Prostate gland (tissue), 2 donors: ENCODE measurements at regions of chr20 and their contacts with region 1.

Region 1: DNA sequence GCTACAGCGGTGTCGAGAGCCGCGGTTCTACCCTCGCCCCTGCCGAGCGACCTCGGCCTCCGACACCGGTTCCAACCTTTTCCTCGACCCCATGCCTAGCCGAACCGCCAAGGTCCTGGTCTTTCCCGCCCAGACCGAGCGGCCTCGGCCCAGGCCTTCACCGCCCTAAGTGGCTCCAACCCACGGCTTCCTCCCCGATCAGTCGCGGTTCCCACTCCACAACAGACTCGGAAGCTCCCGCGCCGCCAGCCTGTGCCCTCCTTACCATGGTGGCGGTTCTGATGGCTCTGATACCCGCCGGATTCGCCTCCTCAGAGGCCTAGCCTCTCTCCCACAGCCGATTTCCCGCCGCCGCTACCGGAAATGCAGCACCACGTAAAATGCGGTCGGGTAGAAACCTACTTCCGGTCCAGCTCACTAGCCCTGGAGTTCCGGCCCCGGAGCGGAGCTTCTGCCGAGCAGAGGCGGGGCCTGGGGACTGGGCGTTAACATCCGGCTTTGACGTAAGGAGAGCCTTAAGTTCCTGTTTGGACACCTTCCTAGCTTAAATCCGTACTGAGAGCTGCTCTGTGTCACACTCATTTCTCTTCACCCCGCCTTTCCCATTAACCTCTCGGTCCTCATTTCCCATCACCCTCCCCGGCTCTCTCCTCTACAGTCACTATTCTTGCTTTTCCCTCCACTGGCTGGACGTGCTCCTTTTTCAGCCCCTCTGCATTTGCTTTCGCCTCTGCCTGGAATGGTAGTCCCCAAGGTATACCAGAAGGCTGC is at the start of gene SNRPB:
- DNase-seq: peak; percentile 98
- H3K4me3 ChIP-seq: peak within 1 kb of the TSS; percentile 65 to 70
- H3K27ac ChIP-seq: peak within 1 kb of the TSS; percentile 88 to 91
- H3K4me1 ChIP-seq: peaks cover 9% of the 10 kb centered on the region
- H3K27me3 ChIP-seq: no peaks in the 10 kb centered on the region
- CTCF ChIP-seq: peak in 1 of 4 experiments; percentile 11
- POLR2A ChIP-seq: peak; percentile 98
- total RNA-seq, gene SNRPB: 215 to 294 TPM

Region 2: DNA sequence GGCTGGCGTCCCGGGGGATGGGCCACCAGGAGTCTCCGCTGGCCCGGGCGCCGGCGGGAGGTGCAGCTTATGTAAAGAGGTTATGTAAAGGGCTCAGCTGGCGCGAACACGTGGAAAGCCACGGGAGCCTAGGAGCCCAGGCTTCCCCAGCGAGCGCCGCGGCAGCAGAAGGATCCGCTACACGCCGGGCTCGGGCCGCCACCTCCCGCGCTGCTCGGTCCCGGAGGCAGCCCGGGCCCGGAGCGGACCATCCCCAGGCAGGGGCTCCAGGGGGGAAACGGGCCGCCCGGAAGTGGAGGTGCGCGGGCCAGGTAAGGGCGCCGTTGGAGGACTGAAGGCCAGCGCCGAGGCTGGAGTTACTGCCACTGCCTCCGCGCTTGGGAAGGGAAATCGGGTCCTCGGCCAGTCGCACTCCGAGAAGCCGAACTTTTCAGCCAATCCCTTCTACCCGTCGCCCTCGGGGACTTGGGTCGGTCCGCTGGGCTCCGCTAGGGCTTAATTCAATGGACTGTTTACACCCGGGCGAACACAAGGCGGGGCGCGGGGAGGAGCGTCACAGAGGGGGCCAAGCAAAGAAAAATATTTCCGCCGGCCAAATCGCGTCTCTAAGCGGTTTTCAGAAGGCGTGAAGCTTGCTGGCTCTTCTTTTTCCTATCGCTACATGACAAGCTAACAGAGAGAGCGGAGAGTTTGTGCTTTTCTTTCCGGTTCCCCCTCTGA is 368.6 kb before region 1 on chr20:
- intact Hi-C with region 1: loop called (anchors 5 kb)
- DNase-seq: peak; percentile 88
- H3K4me3 ChIP-seq: peak overlapping the region; percentile 83 to 99
- H3K27ac ChIP-seq: peak overlapping the region; percentile 99
- H3K4me1 ChIP-seq: peaks cover 19% of the 10 kb centered on the region
- H3K27me3 ChIP-seq: no peaks in the 10 kb centered on the region
- CTCF ChIP-seq: peak in 2 of 4 experiments; percentile 19 to 39
- POLR2A ChIP-seq: peak; percentile 44

Region 3: GRCh38 chr20:2112910-2113309 is 357.7 kb before region 1 on chr20:
- intact Hi-C with region 1: no loop called
- DNase-seq: no peak
- H3K4me3 ChIP-seq: no peak overlapping the region
- H3K27ac ChIP-seq: no peak overlapping the region
- H3K4me1 ChIP-seq: peaks cover 20% of the 10 kb centered on the region
- H3K27me3 ChIP-seq: no peaks in the 10 kb centered on the region
- CTCF ChIP-seq: no peak
- POLR2A ChIP-seq: no peak

Region 4: GRCh38 chr20:2261105-2261504 is 209.5 kb before region 1 on chr20:
- intact Hi-C with region 1: no loop called
- DNase-seq: no peak
- H3K4me3 ChIP-seq: no peak overlapping the region
- H3K27ac ChIP-seq: no peak overlapping the region
- H3K4me1 ChIP-seq: peaks cover 4% of the 10 kb centered on the region
- H3K27me3 ChIP-seq: no peaks in the 10 kb centered on the region
- CTCF ChIP-seq: no peak
- POLR2A ChIP-seq: no peak

Region 5: GRCh38 chr20:2421247-2421646 is 49.4 kb before region 1 on chr20:
- intact Hi-C with region 1: no loop called
- DNase-seq: no peak
- H3K4me3 ChIP-seq: no peak overlapping the region
- H3K27ac ChIP-seq: no peak overlapping the region
- H3K4me1 ChIP-seq: no peaks in the 10 kb centered on the region
- H3K27me3 ChIP-seq: no peaks in the 10 kb centered on the region
- CTCF ChIP-seq: no peak
- POLR2A ChIP-seq: no peak

Region 6: DNA sequence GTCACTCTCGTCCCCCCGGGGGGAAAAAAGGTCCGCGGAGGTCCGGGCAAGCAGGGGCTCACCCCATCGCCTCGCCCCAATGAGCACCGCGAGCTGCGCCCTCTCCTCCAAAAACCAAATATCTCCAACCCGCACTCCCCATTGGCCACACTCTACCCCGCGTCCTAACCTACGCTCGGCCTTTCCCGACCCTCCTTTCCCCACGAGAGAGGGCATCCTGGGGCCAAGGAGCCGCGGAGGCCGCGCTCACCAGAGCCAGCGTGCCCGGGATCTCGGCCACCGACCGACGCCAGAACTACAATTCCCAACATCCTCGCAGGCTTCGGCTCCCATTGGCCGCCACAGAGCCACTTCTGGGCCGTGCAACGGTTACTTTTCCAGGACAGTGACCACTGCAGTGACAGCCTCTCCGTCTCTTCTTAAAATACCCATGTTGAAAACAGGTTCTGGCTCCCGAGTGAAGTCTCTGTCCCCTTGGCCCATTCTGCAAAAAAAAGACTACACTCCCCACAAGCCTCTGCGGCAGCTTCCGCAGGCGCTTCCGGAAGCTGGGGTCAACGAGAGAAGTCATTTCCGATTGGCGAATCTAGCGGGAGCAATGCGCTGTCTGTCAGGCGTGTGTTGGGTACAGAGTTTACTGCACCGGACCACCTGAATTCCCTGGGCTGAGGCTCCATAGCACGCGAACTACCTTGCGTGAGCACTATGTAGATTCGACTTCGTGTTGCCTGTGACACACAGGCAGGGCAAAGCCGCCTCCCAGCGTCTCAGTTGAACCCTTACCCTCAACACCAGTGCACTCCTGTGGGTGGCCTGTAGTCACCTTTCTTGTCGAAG is 38.2 kb after region 1 on chr20 and contains the start of gene ZNF343:
- intact Hi-C with region 1: loop called (anchors 2 kb)
- DNase-seq: peak; percentile 76
- H3K4me3 ChIP-seq: peak within 1 kb of the TSS; percentile 80 to 87
- H3K27ac ChIP-seq: peak within 1 kb of the TSS; percentile 88 to 90
- H3K4me1 ChIP-seq: no peaks in the 10 kb centered on the region
- H3K27me3 ChIP-seq: no peaks in the 10 kb centered on the region
- CTCF ChIP-seq: no peak
- POLR2A ChIP-seq: no peak
- total RNA-seq, gene ZNF343: 8.0 to 10.4 TPM

Region 7: GRCh38 chr20:2663887-2664719 is 193.5 kb after region 1 on chr20 and contains the start of gene IDH3B:
- intact Hi-C with region 1: loop called (anchors 5 kb)
- DNase-seq: peak; percentile 92
- H3K4me3 ChIP-seq: peak within 1 kb of the TSS; percentile 74 to 95
- H3K27ac ChIP-seq: peak within 1 kb of the TSS; percentile 88 to 90
- H3K4me1 ChIP-seq: peaks cover 3% of the 10 kb centered on the region
- H3K27me3 ChIP-seq: no peaks in the 10 kb centered on the region
- CTCF ChIP-seq: peak in 1 of 4 experiments; percentile 12
- POLR2A ChIP-seq: peak; percentile 77
- total RNA-seq, gene IDH3B: 132 to 141 TPM